ENCODE measurements at regions of chr5 and their contacts with region 1.

Region 1: DNA sequence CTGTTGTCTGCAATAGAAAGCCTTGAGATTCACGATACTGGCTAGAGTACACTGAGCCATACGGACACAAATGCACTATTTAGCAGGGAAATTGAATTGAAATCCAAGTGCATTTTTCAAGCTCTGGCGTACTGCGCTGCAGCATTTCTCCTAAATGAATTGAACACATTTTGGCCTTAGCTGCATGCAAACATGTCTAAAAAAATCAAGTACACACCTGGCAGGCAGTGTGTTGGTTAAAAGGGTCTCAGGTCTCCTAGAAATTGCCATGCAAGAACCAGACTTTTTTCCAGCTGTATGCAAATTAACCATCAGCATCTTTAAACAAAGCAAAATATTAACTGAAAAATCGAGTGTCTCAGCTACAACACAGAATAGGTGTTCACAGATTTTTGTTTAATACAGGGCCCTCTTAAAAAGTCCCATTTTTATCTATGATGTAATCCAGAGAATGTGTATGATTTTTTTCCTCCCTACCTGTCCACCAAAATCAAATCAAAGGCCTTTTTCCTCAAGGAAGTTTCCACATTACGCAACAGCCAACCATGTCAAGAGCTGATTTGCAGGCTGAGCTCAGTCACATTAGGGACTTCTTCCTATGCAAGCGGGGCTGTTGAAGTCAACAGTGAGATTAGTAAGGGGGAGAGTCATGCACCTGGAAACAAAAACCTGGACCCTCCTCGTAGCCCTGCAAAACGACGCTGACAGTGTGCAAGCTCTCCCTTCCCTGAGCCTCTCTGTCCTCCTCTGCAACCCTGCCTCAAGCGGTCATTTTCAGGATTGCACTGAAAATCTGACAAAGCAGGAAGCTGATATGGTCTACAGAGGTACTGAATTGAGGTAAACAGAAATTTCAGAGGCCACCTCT is 14.1 kb upstream of the SFXN1 start:
- DNase-seq: peak; percentile 51
- ATAC-seq: peak; percentile 77
- H3K4me3 ChIP-seq: no peak overlapping the region
- H3K4me3 Mint-ChIP-seq: no peak overlapping the region
- H3K27ac ChIP-seq: no peak overlapping the region
- H3K27ac Mint-ChIP-seq: no peak overlapping the region
- H3K4me1 ChIP-seq: peaks cover 0 to 3% of the 10 kb centered on the region in 2 donors
- H3K4me1 Mint-ChIP-seq: peaks cover 5% of the 10 kb centered on the region
- H3K27me3 ChIP-seq: peaks cover 0 to 6% (median 1%) of the 10 kb centered on the region in 4 experiments
- H3K27me3 Mint-ChIP-seq: peaks cover 29% of the 10 kb centered on the region
- CTCF ChIP-seq: peak; percentile 78

Region 2: GRCh38 chr5:174448662-174449061 is 1015.6 kb before region 1 on chr5:
- CTCF ChIA-PET with region 1: no interaction called
- POLR2A ChIA-PET with region 1: no interaction called
- intact Hi-C with region 1: no loop called
- DNase-seq: no peak
- ATAC-seq: no peak
- H3K4me3 ChIP-seq: no peak overlapping the region
- H3K4me3 Mint-ChIP-seq: no peak overlapping the region
- H3K27ac ChIP-seq: no peak overlapping the region
- H3K27ac Mint-ChIP-seq: no peak overlapping the region
- H3K4me1 ChIP-seq: no peaks in the 10 kb centered on the region
- H3K4me1 Mint-ChIP-seq: no peaks in the 10 kb centered on the region
- H3K27me3 ChIP-seq: no peaks in the 10 kb centered on the region
- H3K27me3 Mint-ChIP-seq: no peaks in the 10 kb centered on the region
- CTCF ChIP-seq: no peak

Region 3: DNA sequence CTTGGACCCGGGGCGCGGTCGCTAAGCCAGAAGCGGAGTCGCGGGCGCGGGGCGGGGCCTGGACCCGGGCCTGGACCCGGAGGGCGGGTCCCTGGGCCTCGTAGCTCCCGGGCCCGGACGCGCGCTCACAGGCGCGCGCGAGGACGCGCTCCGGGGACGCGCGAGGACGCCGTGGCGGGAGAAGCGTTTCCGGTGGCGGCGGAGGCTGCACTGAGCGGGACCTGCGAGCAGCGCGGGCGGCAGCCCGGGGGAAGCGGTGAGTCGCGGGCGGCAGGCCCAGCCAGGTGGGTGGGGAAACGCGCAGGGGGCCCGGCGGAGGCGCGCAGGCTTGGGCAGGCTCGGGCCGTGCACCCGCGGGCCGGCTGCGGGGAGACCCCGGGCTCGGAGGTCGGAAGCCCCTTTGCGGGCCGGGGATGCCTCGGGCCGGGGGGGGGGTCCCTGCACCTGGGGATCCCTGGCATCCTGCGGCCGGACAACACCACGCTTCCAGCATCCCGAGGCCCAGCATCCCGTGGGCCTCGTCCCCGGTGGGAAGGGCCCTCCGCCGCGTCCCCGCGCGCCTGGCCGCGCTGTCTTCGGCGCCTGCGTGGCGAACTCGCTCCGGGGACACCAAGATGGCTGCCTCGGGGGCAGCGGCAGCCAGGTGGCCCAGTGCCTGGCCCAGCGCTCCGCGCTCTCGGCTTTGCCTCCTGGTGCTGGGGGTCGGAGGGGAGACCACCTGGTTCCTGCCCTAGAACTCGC is 14.2 kb after region 1 on chr5 and contains the start of gene SFXN1:
- CTCF ChIA-PET with region 1: interaction called, 17 read pairs
- POLR2A ChIA-PET with region 1: no interaction called
- intact Hi-C with region 1: no loop called
- DNase-seq: peak; percentile 76
- ATAC-seq: peak; percentile 85
- H3K4me3 ChIP-seq: peak within 1 kb of the TSS; percentile 50 to 85 (median 73)
- H3K4me3 Mint-ChIP-seq: peak within 1 kb of the TSS; percentile 94
- H3K27ac ChIP-seq: peak within 1 kb of the TSS in 1 of 2 donors; percentile 44
- H3K27ac Mint-ChIP-seq: peak within 1 kb of the TSS; percentile 82
- H3K4me1 ChIP-seq: peaks cover 20 to 23% of the 10 kb centered on the region in 2 donors
- H3K4me1 Mint-ChIP-seq: peaks cover 34% of the 10 kb centered on the region
- H3K27me3 ChIP-seq: no peaks in the 10 kb centered on the region
- H3K27me3 Mint-ChIP-seq: peaks cover 13% of the 10 kb centered on the region
- CTCF ChIP-seq: no peak
- total RNA-seq, gene SFXN1: 30.5 and 39.1 TPM in 2 replicates